Heart right ventricle (tissue), 16 donors: ENCODE measurements at regions of chr6 and their contacts with region 1.

Region 1: DNA sequence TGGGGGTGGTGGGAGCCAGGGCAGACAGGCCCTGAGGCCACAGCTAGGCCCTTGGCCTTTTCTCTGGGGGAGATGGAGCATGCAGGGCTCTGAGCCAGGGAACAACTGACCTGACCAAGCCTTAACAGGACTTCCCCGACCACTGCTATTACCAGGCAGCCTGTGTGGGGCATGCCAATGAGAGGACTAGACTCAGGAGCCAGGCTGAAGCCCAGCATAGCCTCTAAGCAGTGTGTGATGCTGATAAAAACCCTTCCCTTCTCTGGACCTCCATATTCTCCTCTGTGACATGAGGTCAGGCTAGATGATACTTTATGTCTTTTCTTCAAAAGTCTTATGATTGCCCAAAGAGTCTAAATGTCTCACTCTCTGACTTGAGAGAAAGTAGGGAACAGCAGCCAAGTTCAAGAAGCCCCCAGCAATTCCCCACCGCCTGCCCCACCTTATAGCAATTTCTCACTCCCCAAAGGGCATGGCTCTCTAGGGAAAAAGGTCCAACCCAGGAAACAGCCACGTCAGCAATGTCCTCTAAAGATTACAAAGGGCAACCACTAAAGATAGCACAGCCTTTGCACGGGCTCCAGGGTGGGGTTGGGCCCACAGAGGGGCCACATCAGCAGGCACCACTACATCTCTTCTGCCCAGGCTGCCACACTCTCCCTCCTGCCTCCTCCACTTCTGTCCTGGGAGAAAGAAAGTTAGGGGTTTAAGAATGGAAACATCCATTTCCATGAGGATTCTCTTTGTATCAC is 71.3 kb downstream of the TRERF1 start:
- DNase-seq: no peak
- ATAC-seq: peak in 3 of 8 donors; percentile 39 to 78 (median 41)
- H3K4me3 ChIP-seq: no peak overlapping the region
- H3K27ac ChIP-seq: peak overlapping the region in 1 of 10 donors; percentile 47
- H3K4me1 ChIP-seq: peaks cover 0 to 38% (median 4%) of the 10 kb centered on the region in 9 donors
- H3K27me3 ChIP-seq: no peaks in the 10 kb centered on the region
- CTCF ChIP-seq: no peak

Region 2: GRCh38 chr6:42339991-42340401 is 40.4 kb before region 1 on chr6:
- intact Hi-C with region 1: loop called in 2 of 10 experiments (anchors 1 to 5 kb)
- DNase-seq: no peak
- ATAC-seq: no peak
- H3K4me3 ChIP-seq: no peak overlapping the region
- H3K27ac ChIP-seq: no peak overlapping the region
- H3K4me1 ChIP-seq: peaks cover 0 to 14% (median 0%) of the 10 kb centered on the region in 9 donors
- H3K27me3 ChIP-seq: no peaks in the 10 kb centered on the region
- CTCF ChIP-seq: no peak

Region 3: GRCh38 chr6:42345696-42346416 is 34.5 kb before region 1 on chr6:
- intact Hi-C with region 1: loop called in 2 of 10 experiments (anchors 1 to 5 kb)
- DNase-seq: no peak
- ATAC-seq: no peak
- H3K4me3 ChIP-seq: no peak overlapping the region
- H3K27ac ChIP-seq: no peak overlapping the region
- H3K4me1 ChIP-seq: peaks cover 0 to under 1% (median 0%) of the 10 kb centered on the region in 9 donors
- H3K27me3 ChIP-seq: no peaks in the 10 kb centered on the region
- CTCF ChIP-seq: no peak